ENCODE measurements at regions of chr16 and their contacts with region 1.

Region 1: GRCh38 chr16:24504472-24505345 is 34.7 kb upstream of the RBBP6 start:
- DNase-seq: peak; percentile 38 to 82
- H3K4me3 ChIP-seq: no peak overlapping the region
- H3K27ac ChIP-seq: no peak overlapping the region
- H3K4me1 ChIP-seq: no peaks in the 10 kb centered on the region
- H3K27me3 ChIP-seq: peaks cover 0 to 56% (median 0%) of the 10 kb centered on the region in 3 donors
- CTCF ChIP-seq: peak in 5 of 7 experiments; percentile 46 to 59 (median 52)
- EP300 ChIP-seq: no peak
- POLR2A ChIP-seq: no peak

Region 2: DNA sequence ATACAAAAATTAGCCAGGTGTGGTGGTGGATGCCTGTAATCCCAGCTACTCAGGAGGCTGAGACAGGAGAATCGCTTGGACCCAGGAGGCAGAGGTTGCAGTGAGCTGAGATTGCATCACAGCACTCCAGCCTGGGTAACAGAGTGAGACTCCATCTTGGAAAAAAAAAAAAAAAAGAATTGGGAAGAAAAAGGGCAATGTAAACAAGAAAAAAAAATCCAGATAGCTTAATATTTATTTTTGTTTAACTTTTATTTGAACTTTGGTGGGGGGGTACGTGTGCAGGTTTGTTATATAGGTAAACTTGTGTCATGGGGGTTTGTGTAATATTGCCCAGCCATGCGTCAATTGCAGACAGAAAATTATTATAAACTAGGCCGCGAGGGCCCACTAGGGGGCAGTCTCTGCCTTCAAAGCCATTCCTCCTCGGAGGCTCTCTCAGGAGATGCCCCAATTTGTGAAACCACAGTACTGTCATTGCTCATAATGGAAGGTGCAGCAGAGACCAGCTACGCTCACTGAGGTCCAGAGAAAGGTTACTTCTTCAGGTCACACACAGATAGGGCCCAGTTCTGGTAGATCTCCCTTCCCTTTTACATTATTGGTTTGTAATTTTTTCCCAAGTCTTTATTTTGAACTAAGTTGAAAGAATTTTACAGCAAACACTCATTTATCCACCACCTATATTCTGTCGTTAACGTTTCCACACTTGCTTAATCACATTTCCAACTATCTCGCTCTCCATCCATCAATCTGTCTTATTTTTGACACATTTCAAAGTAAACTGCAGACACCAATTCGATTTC is 462.7 kb before region 1 on chr16:
- intact Hi-C with region 1: loop called (anchors 10 kb)
- DNase-seq: peak; percentile 62 to 74
- H3K4me3 ChIP-seq: no peak overlapping the region
- H3K27ac ChIP-seq: no peak overlapping the region
- H3K4me1 ChIP-seq: no peaks in the 10 kb centered on the region
- H3K27me3 ChIP-seq: peaks cover 0 to under 1% (median 0%) of the 10 kb centered on the region in 3 donors
- CTCF ChIP-seq: peak in 5 of 7 experiments; percentile 13 to 69 (median 52)
- EP300 ChIP-seq: no peak
- POLR2A ChIP-seq: no peak

Region 3: GRCh38 chr16:24713379-24713778 is 208.7 kb after region 1 on chr16:
- intact Hi-C with region 1: no loop called
- DNase-seq: no peak
- H3K4me3 ChIP-seq: no peak overlapping the region
- H3K27ac ChIP-seq: no peak overlapping the region
- H3K4me1 ChIP-seq: no peaks in the 10 kb centered on the region
- H3K27me3 ChIP-seq: no peaks in the 10 kb centered on the region
- CTCF ChIP-seq: no peak
- EP300 ChIP-seq: no peak
- POLR2A ChIP-seq: no peak